ENCODE measurements at regions of chr17 and their contacts with region 1.

Region 1: GRCh38 chr17:39730095-39730921 is at the start of gene MIEN1:
- DNase-seq: peak; percentile 87 to 100 (median 95)
- ATAC-seq: peak; percentile 98
- H3K4me3 ChIP-seq: peak within 1 kb of the TSS; percentile 95
- H3K4me3 Mint-ChIP-seq: peak within 1 kb of the TSS; percentile 88 to 96 (median 92)
- H3K27ac ChIP-seq: peak within 1 kb of the TSS; percentile 95
- H3K27ac Mint-ChIP-seq: peak within 1 kb of the TSS; percentile 84 to 98 (median 94)
- H3K4me1 ChIP-seq: peaks cover 10% of the 10 kb centered on the region in 2 donors
- H3K4me1 Mint-ChIP-seq: peaks cover 11 to 20% (median 16%) of the 10 kb centered on the region in 7 donors
- H3K27me3 ChIP-seq: no peaks in the 10 kb centered on the region
- H3K27me3 Mint-ChIP-seq: peaks cover 0 to 7% (median 0%) of the 10 kb centered on the region in 5 donors
- total RNA-seq, gene MIEN1: 28.7 to 40.1 (median 32.3) TPM

Region 2: GRCh38 chr17:39401412-39402243 is 328.7 kb before region 1 on chr17 and contains the start of gene FBXL20:
- CTCF ChIA-PET with region 1: no interaction called
- POLR2A ChIA-PET with region 1: no interaction called
- intact Hi-C with region 1: loop called in 1 of 2 experiments (anchors 10 kb)
- DNase-seq: peak; percentile 85 to 94 (median 91)
- ATAC-seq: peak; percentile 89
- H3K4me3 ChIP-seq: peak within 1 kb of the TSS; percentile 84
- H3K4me3 Mint-ChIP-seq: peak within 1 kb of the TSS; percentile 93 to 99 (median 98)
- H3K27ac ChIP-seq: peak within 1 kb of the TSS; percentile 90
- H3K27ac Mint-ChIP-seq: peak within 1 kb of the TSS; percentile 86 to 99 (median 96)
- H3K4me1 ChIP-seq: peaks cover 6 to 13% of the 10 kb centered on the region in 2 donors
- H3K4me1 Mint-ChIP-seq: peaks cover 18 to 56% (median 44%) of the 10 kb centered on the region in 7 donors
- H3K27me3 ChIP-seq: no peaks in the 10 kb centered on the region
- H3K27me3 Mint-ChIP-seq: no peaks in the 10 kb centered on the region
- total RNA-seq, gene FBXL20: 17.6 to 35.0 (median 26.1) TPM

Region 3: DNA sequence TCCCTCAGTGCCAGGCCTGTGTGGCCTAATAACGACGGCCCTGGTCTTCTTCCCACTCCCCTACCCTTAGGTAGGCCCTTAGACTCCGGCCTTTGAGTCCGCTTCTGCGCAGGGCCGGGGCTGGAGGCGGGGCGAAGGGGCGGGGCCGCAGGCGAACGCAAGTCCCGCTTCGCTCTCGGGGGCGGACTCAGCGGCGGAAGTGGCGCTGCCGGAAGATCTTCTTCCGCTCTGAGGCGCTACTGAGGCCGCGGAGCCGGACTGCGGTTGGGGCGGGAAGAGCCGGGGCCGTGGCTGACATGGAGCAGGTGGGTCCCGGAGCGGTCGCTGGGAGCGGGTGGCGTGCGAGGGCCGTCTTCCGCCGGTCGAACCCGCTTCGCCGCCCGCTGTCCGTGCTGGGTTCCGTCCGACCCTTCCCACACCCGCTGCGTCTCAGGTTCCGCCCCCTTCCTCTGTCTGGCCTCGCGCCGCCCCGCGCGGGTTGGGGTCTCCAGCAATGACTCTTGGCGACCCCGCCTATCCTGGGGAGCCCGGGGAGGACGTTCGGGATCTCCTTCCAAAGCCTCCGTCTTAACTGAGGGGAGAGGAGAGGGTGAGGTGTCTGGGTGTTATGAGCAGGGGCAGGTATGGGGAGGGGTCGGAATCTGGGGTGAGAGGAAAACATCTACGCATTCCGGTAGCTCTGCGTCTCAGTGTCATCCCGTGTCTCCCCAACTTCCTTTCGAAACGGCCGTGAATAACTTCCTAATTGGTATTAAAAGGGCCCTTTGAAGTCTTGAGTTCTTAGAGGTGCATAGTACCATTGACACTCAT is 93.2 kb before region 1 on chr17 and contains the start of gene STARD3:
- CTCF ChIA-PET with region 1: interaction called, 4 read pairs
- POLR2A ChIA-PET with region 1: interaction called, 12 read pairs
- intact Hi-C with region 1: loop called (anchors 5 kb)
- DNase-seq: peak; percentile 80 to 92 (median 86)
- ATAC-seq: peak; percentile 95
- H3K4me3 ChIP-seq: peak within 1 kb of the TSS; percentile 86
- H3K4me3 Mint-ChIP-seq: peak within 1 kb of the TSS; percentile 89 to 98 (median 95)
- H3K27ac ChIP-seq: peak within 1 kb of the TSS; percentile 92
- H3K27ac Mint-ChIP-seq: peak within 1 kb of the TSS; percentile 76 to 97 (median 92)
- H3K4me1 ChIP-seq: peaks cover 43 to 49% of the 10 kb centered on the region in 2 donors
- H3K4me1 Mint-ChIP-seq: peaks cover 40 to 71% (median 60%) of the 10 kb centered on the region in 7 donors
- H3K27me3 ChIP-seq: no peaks in the 10 kb centered on the region
- H3K27me3 Mint-ChIP-seq: peaks cover 0 to under 1% (median 0%) of the 10 kb centered on the region in 5 donors
- total RNA-seq, gene STARD3: 69.8 to 143 (median 99.3) TPM

Region 4: GRCh38 chr17:39677542-39678339 is 52.6 kb before region 1 on chr17:
- CTCF ChIA-PET with region 1: interaction called, 3 read pairs
- POLR2A ChIA-PET with region 1: interaction called, 17 read pairs
- intact Hi-C with region 1: loop called in 1 of 2 experiments (anchors 2 kb)
- DNase-seq: no peak
- ATAC-seq: no peak
- H3K4me3 ChIP-seq: no peak overlapping the region
- H3K4me3 Mint-ChIP-seq: peak overlapping the region in 1 of 10 donors; percentile 57
- H3K27ac ChIP-seq: no peak overlapping the region
- H3K27ac Mint-ChIP-seq: peak overlapping the region; percentile 10 to 97 (median 79)
- H3K4me1 ChIP-seq: peaks cover 45 to 65% of the 10 kb centered on the region in 2 donors
- H3K4me1 Mint-ChIP-seq: peaks cover 33 to 62% (median 53%) of the 10 kb centered on the region in 7 donors
- H3K27me3 ChIP-seq: no peaks in the 10 kb centered on the region
- H3K27me3 Mint-ChIP-seq: no peaks in the 10 kb centered on the region

Region 5: GRCh38 chr17:39687811-39688518 is 42.3 kb before region 1 on chr17 and contains the start of gene PGAP3:
- CTCF ChIA-PET with region 1: interaction called, 4 read pairs
- POLR2A ChIA-PET with region 1: interaction called, 13 read pairs
- intact Hi-C with region 1: loop called (anchors 1 to 2 kb)
- DNase-seq: peak; percentile 71 to 86 (median 83)
- ATAC-seq: peak; percentile 95
- H3K4me3 ChIP-seq: peak within 1 kb of the TSS; percentile 93
- H3K4me3 Mint-ChIP-seq: peak within 1 kb of the TSS; percentile 87 to 99 (median 98)
- H3K27ac ChIP-seq: peak within 1 kb of the TSS; percentile 77
- H3K27ac Mint-ChIP-seq: peak within 1 kb of the TSS; percentile 93 to 99 (median 98)
- H3K4me1 ChIP-seq: peaks cover 8 to 18% of the 10 kb centered on the region in 2 donors
- H3K4me1 Mint-ChIP-seq: peaks cover 19 to 32% (median 30%) of the 10 kb centered on the region in 7 donors
- H3K27me3 ChIP-seq: no peaks in the 10 kb centered on the region
- H3K27me3 Mint-ChIP-seq: no peaks in the 10 kb centered on the region
- total RNA-seq, gene PGAP3: 26.3 to 39.9 (median 35.1) TPM

Region 6: GRCh38 chr17:39800540-39800939 is 70.2 kb after region 1 on chr17:
- CTCF ChIA-PET with region 1: no interaction called
- POLR2A ChIA-PET with region 1: no interaction called
- intact Hi-C with region 1: loop called in 1 of 2 experiments (anchors 1 kb)
- DNase-seq: peak in 8 of 9 donors; percentile 46 to 81 (median 80)
- ATAC-seq: peak; percentile 99
- H3K4me3 ChIP-seq: peak overlapping the region; percentile 38
- H3K4me3 Mint-ChIP-seq: peak overlapping the region; percentile 22 to 81 (median 61)
- H3K27ac ChIP-seq: peak overlapping the region; percentile 52
- H3K27ac Mint-ChIP-seq: peak overlapping the region; percentile 89 to 97 (median 94)
- H3K4me1 ChIP-seq: peaks cover 27 to 53% of the 10 kb centered on the region in 2 donors
- H3K4me1 Mint-ChIP-seq: peaks cover 35 to 82% (median 69%) of the 10 kb centered on the region in 7 donors
- H3K27me3 ChIP-seq: no peaks in the 10 kb centered on the region
- H3K27me3 Mint-ChIP-seq: no peaks in the 10 kb centered on the region

Region 7: DNA sequence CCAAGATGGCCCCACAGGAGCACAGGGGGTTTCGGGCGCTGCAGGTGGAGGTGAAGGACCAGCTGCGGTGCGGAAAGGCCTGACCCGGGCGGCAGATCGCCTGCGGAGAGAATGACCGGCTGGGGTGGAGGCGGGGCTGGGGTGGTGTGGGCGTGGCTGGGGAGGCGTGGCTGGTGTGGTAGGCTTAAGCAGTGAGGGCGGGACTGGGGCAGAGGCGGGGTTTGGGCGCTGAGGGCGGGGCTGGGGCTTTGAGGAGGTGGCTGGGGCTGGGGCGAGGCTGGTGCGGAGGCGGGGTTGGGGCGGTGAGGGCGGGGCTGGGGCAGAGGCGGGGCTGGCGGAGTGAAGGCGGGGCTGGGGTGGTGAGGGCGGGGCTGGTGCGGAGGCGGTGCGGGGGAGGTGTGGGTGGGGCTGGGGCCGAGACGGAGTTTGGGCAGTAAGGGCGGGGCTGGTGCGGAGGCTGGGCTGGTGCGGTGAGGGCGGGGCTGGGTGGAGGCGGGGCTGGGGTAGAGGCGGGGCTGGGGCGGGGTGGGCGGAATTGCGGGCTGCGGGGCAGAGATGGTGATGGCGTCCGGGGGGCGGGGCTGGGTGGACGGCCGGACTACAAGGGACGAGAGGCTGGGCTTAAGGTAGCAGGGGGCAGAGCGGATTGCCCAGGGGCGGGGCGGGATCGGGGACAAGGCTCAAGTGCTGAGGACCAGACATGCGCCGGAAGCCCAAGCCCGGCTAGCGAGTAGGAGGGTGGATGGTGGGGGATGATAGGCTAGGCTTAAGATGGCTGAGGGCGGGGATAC is 222.6 kb after region 1 on chr17:
- CTCF ChIA-PET with region 1: no interaction called
- POLR2A ChIA-PET with region 1: no interaction called
- intact Hi-C with region 1: loop called in 1 of 2 experiments (anchors 1 kb)
- DNase-seq: peak; percentile 81 to 98 (median 90)
- ATAC-seq: peak; percentile 94
- H3K4me3 ChIP-seq: peak overlapping the region; percentile 71
- H3K4me3 Mint-ChIP-seq: peak overlapping the region; percentile 68 to 93 (median 82)
- H3K27ac ChIP-seq: peak overlapping the region; percentile 74
- H3K27ac Mint-ChIP-seq: peak overlapping the region; percentile 28 to 87 (median 72)
- H3K4me1 ChIP-seq: peaks cover 5 to 18% of the 10 kb centered on the region in 2 donors
- H3K4me1 Mint-ChIP-seq: peaks cover 1 to 43% (median 27%) of the 10 kb centered on the region in 7 donors
- H3K27me3 ChIP-seq: no peaks in the 10 kb centered on the region
- H3K27me3 Mint-ChIP-seq: peaks cover 0 to 7% (median 0%) of the 10 kb centered on the region in 5 donors

Measured in naive thymus-derived CD4-positive, alpha-beta T cell (primary cell).